ENCODE measurements at regions of chr7 and their contacts with region 1.

Region 1: GRCh38 chr7:41425926-41426325 is 277.0 kb downstream of the INHBA start:
- DNase-seq: peak; percentile 84
- H3K4me3 ChIP-seq: no peak overlapping the region
- H3K27ac ChIP-seq: peak overlapping the region; percentile 52
- H3K4me1 ChIP-seq: peaks cover 11% of the 10 kb centered on the region
- H3K27me3 ChIP-seq: no peaks in the 10 kb centered on the region
- CTCF ChIP-seq: no peak

Region 2: DNA sequence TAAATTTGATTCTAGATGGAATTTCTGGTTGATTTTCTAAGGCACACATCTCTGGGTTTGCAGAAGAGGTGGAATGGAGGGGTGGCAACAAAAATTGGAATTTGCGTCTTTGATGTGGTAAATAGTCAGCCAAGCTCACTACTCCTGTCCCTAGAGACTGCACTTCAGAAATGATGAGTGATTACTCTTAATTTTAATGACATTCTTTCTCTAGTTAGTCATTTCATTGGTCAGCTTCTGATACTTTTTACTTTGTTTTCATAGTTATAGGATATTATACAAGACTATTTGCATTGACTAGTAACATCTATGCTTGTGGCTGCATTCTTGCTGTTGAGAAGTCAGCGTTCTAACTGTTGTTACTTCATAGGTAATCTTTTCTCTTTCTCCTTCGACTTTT is 632.8 kb before region 1 on chr7:
- CTCF ChIA-PET with region 1: no interaction called
- dilution Hi-C with region 1: no loop called
- in situ Hi-C with region 1: no loop called
- intact Hi-C with region 1: no loop called
- DNase-seq: no peak
- H3K4me3 ChIP-seq: no peak overlapping the region
- H3K27ac ChIP-seq: no peak overlapping the region
- H3K4me1 ChIP-seq: peaks cover 5% of the 10 kb centered on the region
- H3K27me3 ChIP-seq: no peaks in the 10 kb centered on the region
- CTCF ChIP-seq: no peak

Region 3: DNA sequence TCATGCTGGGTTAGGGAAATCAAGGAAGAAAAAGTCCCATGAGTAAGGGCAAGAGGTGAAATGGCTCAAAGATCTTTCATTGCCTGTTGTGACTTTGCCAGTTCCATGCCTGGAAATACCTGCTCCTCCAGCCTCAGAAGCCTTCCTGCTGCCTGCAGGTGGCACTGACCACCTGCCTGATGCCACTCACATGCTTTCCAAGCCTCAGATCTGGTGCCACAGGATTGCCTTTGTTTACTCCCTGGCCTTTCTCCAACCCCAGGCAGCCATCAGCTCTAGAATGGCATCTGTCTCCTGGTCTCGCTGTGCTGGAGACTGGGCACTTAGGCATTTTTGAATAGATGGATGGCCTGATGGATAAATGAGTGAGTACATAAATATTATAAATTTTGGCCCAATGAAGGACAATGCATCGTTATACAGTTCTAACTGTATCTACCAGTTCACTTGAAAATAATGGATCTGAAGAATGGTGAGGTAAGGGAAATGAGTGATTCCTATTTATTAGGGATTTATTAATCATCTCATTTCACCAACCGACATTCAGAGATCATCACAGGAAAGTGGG is 380.3 kb before region 1 on chr7:
- CTCF ChIA-PET with region 1: no interaction called
- dilution Hi-C with region 1: no loop called
- in situ Hi-C with region 1: no loop called
- intact Hi-C with region 1: loop called (anchors 5 kb)
- DNase-seq: peak; percentile 70
- H3K4me3 ChIP-seq: no peak overlapping the region
- H3K27ac ChIP-seq: no peak overlapping the region
- H3K4me1 ChIP-seq: peaks cover 16% of the 10 kb centered on the region
- H3K27me3 ChIP-seq: no peaks in the 10 kb centered on the region
- CTCF ChIP-seq: peak; percentile 71 to 88

Region 4: DNA sequence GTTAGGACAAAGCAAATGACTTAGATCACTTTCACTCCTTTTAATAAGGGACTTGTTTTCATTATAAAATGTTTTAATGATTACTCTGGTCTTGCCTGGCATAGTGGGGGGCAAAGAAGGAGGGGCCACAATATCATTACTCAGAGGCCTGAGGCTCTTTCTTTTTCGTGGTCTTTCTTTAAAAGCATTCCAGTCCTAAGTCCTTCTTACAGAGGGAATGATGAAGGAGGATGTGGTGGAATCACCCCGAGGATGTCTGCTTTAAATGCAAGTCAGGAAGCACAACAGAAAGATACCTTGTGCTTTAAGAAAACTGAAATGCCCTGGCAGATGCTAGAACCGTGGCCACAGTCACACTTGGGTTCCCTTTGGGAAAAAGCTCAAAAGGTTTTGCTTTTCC is 102.1 kb before region 1 on chr7:
- CTCF ChIA-PET with region 1: no interaction called
- dilution Hi-C with region 1: no loop called
- in situ Hi-C with region 1: no loop called
- intact Hi-C with region 1: no loop called
- DNase-seq: no peak
- H3K4me3 ChIP-seq: no peak overlapping the region
- H3K27ac ChIP-seq: no peak overlapping the region
- H3K4me1 ChIP-seq: peaks cover 9% of the 10 kb centered on the region
- H3K27me3 ChIP-seq: no peaks in the 10 kb centered on the region
- CTCF ChIP-seq: no peak

Region 5: GRCh38 chr7:41544241-41544640 is 118.3 kb after region 1 on chr7:
- CTCF ChIA-PET with region 1: no interaction called
- dilution Hi-C with region 1: no loop called
- in situ Hi-C with region 1: no loop called
- intact Hi-C with region 1: no loop called
- DNase-seq: no peak
- H3K4me3 ChIP-seq: no peak overlapping the region
- H3K27ac ChIP-seq: no peak overlapping the region
- H3K4me1 ChIP-seq: no peaks in the 10 kb centered on the region
- H3K27me3 ChIP-seq: no peaks in the 10 kb centered on the region
- CTCF ChIP-seq: no peak

Region 6: DNA sequence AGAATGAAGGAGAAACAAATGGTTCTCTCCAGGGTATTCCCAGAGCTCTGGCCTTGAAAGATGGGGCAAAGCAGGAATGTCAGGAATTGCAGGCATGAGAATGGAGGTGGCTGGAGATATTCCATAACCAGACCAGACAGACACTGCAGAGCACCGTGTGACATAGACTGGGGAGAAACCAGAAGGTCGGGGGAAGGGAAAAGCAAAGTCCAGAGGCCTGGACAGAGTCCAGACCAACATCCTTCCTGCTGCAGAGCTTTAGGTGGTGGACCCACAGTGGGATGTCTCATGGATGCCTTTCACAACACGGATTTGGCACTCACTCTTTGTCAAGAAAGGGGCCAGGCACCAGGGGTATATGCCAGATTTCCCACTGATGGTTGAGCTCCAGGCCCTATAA is 454.2 kb after region 1 on chr7:
- CTCF ChIA-PET with region 1: no interaction called
- dilution Hi-C with region 1: no loop called
- in situ Hi-C with region 1: no loop called
- intact Hi-C with region 1: no loop called
- DNase-seq: no peak
- H3K4me3 ChIP-seq: no peak overlapping the region
- H3K27ac ChIP-seq: no peak overlapping the region
- H3K4me1 ChIP-seq: peaks cover 12% of the 10 kb centered on the region
- H3K27me3 ChIP-seq: no peaks in the 10 kb centered on the region
- CTCF ChIP-seq: no peak